B cell (primary cell): ENCODE measurements at regions of chr17 and their contacts with region 1.

Region 1: GRCh38 chr17:49677933-49678847 is at the start of gene SPOP:
- DNase-seq: peak; percentile 99
- ATAC-seq: peak; percentile 91
- H3K4me3 ChIP-seq: peak within 1 kb of the TSS; percentile 73 to 97 (median 87)
- H3K4me3 Mint-ChIP-seq: peak within 1 kb of the TSS; percentile 94
- H3K27ac ChIP-seq: peak within 1 kb of the TSS; percentile 98 to 99
- H3K27ac Mint-ChIP-seq: peak within 1 kb of the TSS; percentile 99
- H3K4me1 ChIP-seq: peaks cover 31 to 33% of the 10 kb centered on the region in 2 donors
- H3K4me1 Mint-ChIP-seq: peaks cover 43% of the 10 kb centered on the region
- H3K27me3 ChIP-seq: no peaks in the 10 kb centered on the region
- H3K27me3 Mint-ChIP-seq: no peaks in the 10 kb centered on the region
- CTCF ChIP-seq: no peak
- total RNA-seq, gene SPOP: 72.1 and 79.2 TPM in 2 replicates

Region 2: DNA sequence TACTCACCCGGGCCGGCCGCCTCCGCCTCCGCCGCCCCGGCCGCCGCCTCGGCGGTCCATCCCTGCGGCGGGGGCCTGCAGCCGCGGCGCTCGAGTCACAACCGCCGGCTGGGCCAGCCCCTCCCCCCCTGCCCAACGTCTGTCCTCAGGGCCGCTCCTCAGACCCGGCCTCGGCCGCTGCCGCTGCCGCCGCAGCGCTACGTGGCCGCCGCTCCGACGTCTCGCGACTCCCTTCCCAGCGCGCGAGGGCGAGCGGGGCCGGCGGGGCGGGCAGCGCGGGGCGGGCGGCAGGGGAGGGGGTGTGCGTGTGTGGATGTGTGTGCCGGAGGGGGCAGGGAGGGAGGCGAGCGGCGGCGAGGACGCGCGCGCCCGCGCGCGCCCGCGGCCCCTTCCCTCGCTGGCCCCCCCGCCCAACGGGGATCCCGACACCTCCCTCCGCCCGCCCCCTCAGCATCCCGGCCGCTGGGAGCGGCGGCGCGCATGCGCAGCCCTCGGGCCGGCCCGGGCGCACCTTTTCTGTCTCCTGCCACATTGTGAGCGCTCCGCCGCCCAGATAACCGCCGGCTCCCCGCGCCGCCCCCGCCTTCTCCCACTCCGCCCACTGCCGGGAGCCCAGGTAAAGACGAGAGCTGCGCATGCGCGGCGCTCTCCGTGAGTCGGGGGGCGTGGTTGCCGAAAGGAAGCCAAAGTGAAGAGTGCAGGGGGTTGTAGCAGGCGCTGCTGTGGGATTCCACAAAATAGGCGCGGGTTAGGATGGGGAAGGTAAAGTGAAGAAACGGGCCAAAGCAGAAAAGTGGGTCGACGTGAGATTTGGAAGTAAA is 316.1 kb before region 1 on chr17 and contains the start of gene ZNF652:
- CTCF ChIA-PET with region 1: no interaction called
- POLR2A ChIA-PET with region 1: no interaction called
- intact Hi-C with region 1: loop called (anchors 5 kb)
- DNase-seq: peak; percentile 98
- ATAC-seq: peak; percentile 69
- H3K4me3 ChIP-seq: peak within 1 kb of the TSS; percentile 79 to 95 (median 89)
- H3K4me3 Mint-ChIP-seq: peak within 1 kb of the TSS; percentile 99
- H3K27ac ChIP-seq: peak within 1 kb of the TSS; percentile 70 to 76
- H3K27ac Mint-ChIP-seq: peak within 1 kb of the TSS; percentile 98
- H3K4me1 ChIP-seq: peaks cover 50% of the 10 kb centered on the region in 2 donors
- H3K4me1 Mint-ChIP-seq: peaks cover 62% of the 10 kb centered on the region
- H3K27me3 ChIP-seq: no peaks in the 10 kb centered on the region
- H3K27me3 Mint-ChIP-seq: no peaks in the 10 kb centered on the region
- CTCF ChIP-seq: no peak
- total RNA-seq, gene ZNF652: 82.4 and 86.2 TPM in 2 replicates

Region 3: GRCh38 chr17:49482144-49482817 is 195.9 kb before region 1 on chr17:
- CTCF ChIA-PET with region 1: no interaction called
- POLR2A ChIA-PET with region 1: no interaction called
- intact Hi-C with region 1: no loop called
- DNase-seq: no peak
- ATAC-seq: no peak
- H3K4me3 ChIP-seq: no peak overlapping the region
- H3K4me3 Mint-ChIP-seq: no peak overlapping the region
- H3K27ac ChIP-seq: no peak overlapping the region
- H3K27ac Mint-ChIP-seq: no peak overlapping the region
- H3K4me1 ChIP-seq: no peaks in the 10 kb centered on the region
- H3K4me1 Mint-ChIP-seq: no peaks in the 10 kb centered on the region
- H3K27me3 ChIP-seq: peaks cover 0 to 59% (median 4%) of the 10 kb centered on the region in 4 experiments
- H3K27me3 Mint-ChIP-seq: peaks cover 74% of the 10 kb centered on the region
- CTCF ChIP-seq: no peak

Region 4: DNA sequence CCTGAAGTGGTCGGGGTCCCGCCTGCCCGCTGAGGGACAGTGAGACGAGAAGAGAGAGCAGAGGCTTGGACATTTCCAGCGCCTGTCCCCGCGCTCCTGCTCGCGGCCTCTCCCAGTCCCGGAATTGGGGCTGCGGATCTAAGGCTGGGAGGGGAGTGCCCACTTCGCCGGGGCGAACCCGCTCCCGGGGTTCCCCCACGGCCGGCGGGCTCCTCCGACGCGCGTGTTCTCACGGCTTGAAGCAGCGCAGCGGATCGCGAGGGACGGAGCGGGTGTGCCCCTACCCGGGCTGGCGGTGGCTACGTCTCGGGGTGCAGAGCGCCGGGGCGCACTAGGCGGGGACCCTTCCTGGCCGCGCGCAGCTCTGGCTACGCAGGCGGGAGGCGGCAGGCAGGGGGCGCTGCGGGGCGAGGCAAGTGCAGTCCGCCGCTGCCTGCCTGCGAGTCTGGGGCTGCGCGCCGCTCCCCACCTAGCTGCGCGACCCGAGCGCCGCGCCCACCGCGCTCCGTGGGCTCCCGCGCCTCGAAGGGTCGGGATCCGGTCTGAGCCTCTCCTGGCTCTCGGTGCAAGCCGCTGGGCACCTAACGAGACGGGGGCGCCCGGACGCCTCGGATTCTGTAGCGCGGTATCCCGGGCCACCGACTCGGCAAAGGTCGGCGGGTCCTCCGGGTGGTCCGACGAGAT is 181.9 kb before region 1 on chr17:
- CTCF ChIA-PET with region 1: no interaction called
- POLR2A ChIA-PET with region 1: no interaction called
- intact Hi-C with region 1: loop called (anchors 5 kb)
- DNase-seq: peak; percentile 88
- ATAC-seq: peak; percentile 75
- H3K4me3 ChIP-seq: peak overlapping the region in 4 of 5 experiments; percentile 54 to 74 (median 58)
- H3K4me3 Mint-ChIP-seq: peak overlapping the region; percentile 87
- H3K27ac ChIP-seq: no peak overlapping the region
- H3K27ac Mint-ChIP-seq: no peak overlapping the region
- H3K4me1 ChIP-seq: peaks cover 30 to 34% of the 10 kb centered on the region in 2 donors
- H3K4me1 Mint-ChIP-seq: peaks cover 29% of the 10 kb centered on the region
- H3K27me3 ChIP-seq: peaks cover 0 to 53% (median 43%) of the 10 kb centered on the region in 4 experiments
- H3K27me3 Mint-ChIP-seq: peaks cover 41% of the 10 kb centered on the region
- CTCF ChIP-seq: peak; percentile 92

Region 5: GRCh38 chr17:49549691-49550678 is 128.2 kb before region 1 on chr17:
- CTCF ChIA-PET with region 1: no interaction called
- POLR2A ChIA-PET with region 1: no interaction called
- intact Hi-C with region 1: no loop called
- DNase-seq: peak; percentile 2
- ATAC-seq: no peak
- H3K4me3 ChIP-seq: no peak overlapping the region
- H3K4me3 Mint-ChIP-seq: no peak overlapping the region
- H3K27ac ChIP-seq: no peak overlapping the region
- H3K27ac Mint-ChIP-seq: no peak overlapping the region
- H3K4me1 ChIP-seq: no peaks in the 10 kb centered on the region
- H3K4me1 Mint-ChIP-seq: no peaks in the 10 kb centered on the region
- H3K27me3 ChIP-seq: peaks cover 0 to 2% (median under 1%) of the 10 kb centered on the region in 4 experiments
- H3K27me3 Mint-ChIP-seq: peaks cover 10% of the 10 kb centered on the region
- CTCF ChIP-seq: no peak

Region 6: DNA sequence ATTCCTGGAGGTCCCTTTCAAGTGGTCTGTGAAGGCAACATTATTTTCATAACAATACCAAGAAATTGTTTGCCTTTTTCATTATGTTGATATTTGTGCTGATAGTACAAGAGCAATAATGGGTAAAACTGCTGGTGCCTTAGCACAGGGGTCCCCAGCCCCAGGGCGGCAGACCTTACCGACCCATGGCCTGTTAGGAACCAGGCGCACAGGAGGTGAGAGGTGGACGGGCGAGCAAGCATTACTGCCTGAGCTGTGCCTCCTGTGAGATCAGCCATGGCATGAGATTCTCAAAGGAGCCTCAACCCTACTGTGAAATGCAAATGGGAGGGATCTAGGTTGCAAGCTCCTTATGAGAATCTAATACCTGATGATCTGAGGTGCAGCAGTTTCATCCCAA is 15.3 kb before region 1 on chr17:
- CTCF ChIA-PET with region 1: interaction called, 12 read pairs
- POLR2A ChIA-PET with region 1: no interaction called
- intact Hi-C with region 1: no loop called
- DNase-seq: no peak
- ATAC-seq: no peak
- H3K4me3 ChIP-seq: no peak overlapping the region
- H3K4me3 Mint-ChIP-seq: no peak overlapping the region
- H3K27ac ChIP-seq: no peak overlapping the region
- H3K27ac Mint-ChIP-seq: no peak overlapping the region
- H3K4me1 ChIP-seq: peaks cover 8 to 9% of the 10 kb centered on the region in 2 donors
- H3K4me1 Mint-ChIP-seq: peaks cover 50% of the 10 kb centered on the region
- H3K27me3 ChIP-seq: no peaks in the 10 kb centered on the region
- H3K27me3 Mint-ChIP-seq: no peaks in the 10 kb centered on the region
- CTCF ChIP-seq: no peak

Region 7: DNA sequence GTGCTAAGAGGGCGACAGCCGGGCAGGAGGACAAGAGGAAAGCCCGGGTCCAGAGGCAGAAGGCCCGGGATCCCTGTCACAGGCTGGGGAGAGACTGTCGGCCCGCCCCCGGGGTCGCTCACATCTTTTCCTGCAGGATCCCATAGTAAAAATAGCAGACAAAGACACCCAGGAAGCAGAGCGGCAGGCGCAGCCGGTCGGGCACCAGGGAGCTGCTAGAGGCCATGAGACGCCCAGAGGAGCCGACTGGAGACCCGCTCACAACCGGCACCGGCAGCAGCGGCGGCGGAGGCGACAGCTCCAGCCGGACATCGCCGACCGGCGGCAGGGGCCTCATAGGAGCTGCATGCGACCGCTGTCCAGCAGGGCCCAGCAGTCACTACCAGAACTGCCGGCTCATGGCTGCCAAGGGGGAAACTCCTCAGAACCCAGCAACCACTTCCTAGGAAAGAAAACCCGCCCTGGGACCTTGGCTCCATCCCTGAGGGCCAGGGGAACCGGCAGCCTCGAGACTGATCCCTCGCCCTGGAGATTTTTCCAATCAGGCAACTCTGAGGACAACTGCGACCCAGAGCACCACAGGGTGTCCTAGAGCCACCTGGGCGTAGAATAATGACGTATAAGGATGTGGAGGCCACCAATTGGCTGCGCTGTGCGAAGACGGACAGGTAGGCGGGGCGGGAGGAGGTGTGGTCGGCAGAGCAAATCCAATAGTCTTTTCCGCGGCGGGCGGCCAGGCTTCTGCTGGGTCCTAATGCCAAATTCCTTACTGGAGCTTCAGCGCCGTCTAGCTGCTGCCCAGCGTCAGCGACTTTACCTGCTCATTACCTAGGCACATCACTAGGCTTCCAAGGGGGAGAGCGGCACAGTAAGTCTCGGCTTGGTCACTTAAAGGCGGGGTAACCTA is 29.7 kb after region 1 on chr17 and contains the start of gene SLC35B1:
- CTCF ChIA-PET with region 1: interaction called, 5 read pairs
- POLR2A ChIA-PET with region 1: interaction called, 6 read pairs
- intact Hi-C with region 1: loop called (anchors 1 kb)
- DNase-seq: peak; percentile 99
- ATAC-seq: peak; percentile 98
- H3K4me3 ChIP-seq: peak within 1 kb of the TSS; percentile 61 to 94 (median 84)
- H3K4me3 Mint-ChIP-seq: peak within 1 kb of the TSS; percentile 88
- H3K27ac ChIP-seq: peak within 1 kb of the TSS; percentile 68 to 93
- H3K27ac Mint-ChIP-seq: peak within 1 kb of the TSS; percentile 93
- H3K4me1 ChIP-seq: peaks cover 19 to 25% of the 10 kb centered on the region in 2 donors
- H3K4me1 Mint-ChIP-seq: peaks cover 31% of the 10 kb centered on the region
- H3K27me3 ChIP-seq: no peaks in the 10 kb centered on the region
- H3K27me3 Mint-ChIP-seq: no peaks in the 10 kb centered on the region
- CTCF ChIP-seq: peak; percentile 81
- total RNA-seq, gene SLC35B1: 40.5 and 47.2 TPM in 2 replicates

Region 8: DNA sequence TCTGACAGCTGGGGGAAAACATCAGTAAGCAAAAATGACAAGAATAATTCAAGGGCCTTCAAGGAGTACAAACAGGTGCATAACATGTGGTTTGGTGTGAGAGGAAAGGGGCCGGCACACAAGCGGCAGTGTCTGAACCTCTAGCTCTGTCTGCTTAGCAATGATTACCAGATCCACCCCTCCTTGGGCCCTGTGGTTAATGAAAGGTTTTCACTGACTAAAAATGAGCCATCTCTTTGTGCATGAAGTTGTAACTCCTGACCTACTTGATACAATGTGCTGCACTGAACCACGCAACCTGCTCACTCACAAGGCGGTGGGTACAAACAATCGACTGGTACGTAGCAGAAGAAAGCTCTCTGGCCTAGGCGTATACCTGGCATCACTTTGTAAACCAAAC is 70.6 kb after region 1 on chr17:
- CTCF ChIA-PET with region 1: interaction called, 4 read pairs
- POLR2A ChIA-PET with region 1: interaction called, 12 read pairs
- intact Hi-C with region 1: no loop called
- DNase-seq: peak; percentile 67
- ATAC-seq: peak; percentile 64
- H3K4me3 ChIP-seq: peak overlapping the region in 1 of 5 experiments; percentile 6
- H3K4me3 Mint-ChIP-seq: peak overlapping the region; percentile 93
- H3K27ac ChIP-seq: peak overlapping the region; percentile 89 to 95
- H3K27ac Mint-ChIP-seq: peak overlapping the region; percentile 98
- H3K4me1 ChIP-seq: peaks cover 68 to 78% of the 10 kb centered on the region in 2 donors
- H3K4me1 Mint-ChIP-seq: peaks cover 82% of the 10 kb centered on the region
- H3K27me3 ChIP-seq: no peaks in the 10 kb centered on the region
- H3K27me3 Mint-ChIP-seq: no peaks in the 10 kb centered on the region
- CTCF ChIP-seq: no peak